ENCODE measurements at regions of chr2 and their contacts with region 1.

Region 1: GRCh38 chr2:37623971-37624900 is 47.2 kb downstream of the CDC42EP3 start:
- DNase-seq: peak in 2 of 5 donors; percentile 20 to 43
- H3K4me3 ChIP-seq: peak overlapping the region in 1 of 2 donors; percentile 36
- H3K4me3 Mint-ChIP-seq: peak overlapping the region; percentile 1 to 83 (median 78)
- H3K27ac ChIP-seq: peak overlapping the region; percentile 66
- H3K27ac Mint-ChIP-seq: peak overlapping the region; percentile 87 to 97 (median 91)
- H3K4me1 ChIP-seq: peaks cover 75% of the 10 kb centered on the region
- H3K4me1 Mint-ChIP-seq: peaks cover 52 to 84% (median 68%) of the 10 kb centered on the region in 4 donors
- H3K27me3 ChIP-seq: no peaks in the 10 kb centered on the region
- H3K27me3 Mint-ChIP-seq: no peaks in the 10 kb centered on the region

Region 2: DNA sequence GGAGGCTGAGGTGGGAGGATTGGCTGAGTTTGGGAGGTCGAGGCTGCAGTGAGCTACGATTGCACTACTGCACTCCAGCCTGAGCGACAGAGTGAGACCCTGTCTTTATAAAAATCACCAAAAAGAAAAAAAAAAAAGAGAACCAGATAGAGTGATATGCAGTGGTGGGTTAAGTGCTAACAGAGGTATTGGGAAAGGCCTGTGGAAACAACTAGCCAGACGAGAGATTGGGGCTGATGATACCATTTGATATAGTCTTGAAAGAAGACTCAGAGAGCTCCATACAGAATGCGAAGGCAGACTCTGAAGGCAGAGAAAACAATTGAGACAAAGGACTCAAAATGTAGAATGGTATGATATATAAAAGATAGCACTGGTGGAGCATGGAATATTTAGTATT is 86.9 kb before region 1 on chr2:
- CTCF ChIA-PET with region 1: no interaction called
- POLR2A ChIA-PET with region 1: interaction called, 10 read pairs
- intact Hi-C with region 1: loop called (anchors 5 kb)
- DNase-seq: no peak
- H3K4me3 ChIP-seq: no peak overlapping the region
- H3K4me3 Mint-ChIP-seq: no peak overlapping the region
- H3K27ac ChIP-seq: no peak overlapping the region
- H3K27ac Mint-ChIP-seq: no peak overlapping the region
- H3K4me1 ChIP-seq: no peaks in the 10 kb centered on the region
- H3K4me1 Mint-ChIP-seq: peaks cover 0 to 5% (median under 1%) of the 10 kb centered on the region in 4 donors
- H3K27me3 ChIP-seq: no peaks in the 10 kb centered on the region
- H3K27me3 Mint-ChIP-seq: peaks cover 0 to 1% of the 10 kb centered on the region in 2 donors

Region 3: DNA sequence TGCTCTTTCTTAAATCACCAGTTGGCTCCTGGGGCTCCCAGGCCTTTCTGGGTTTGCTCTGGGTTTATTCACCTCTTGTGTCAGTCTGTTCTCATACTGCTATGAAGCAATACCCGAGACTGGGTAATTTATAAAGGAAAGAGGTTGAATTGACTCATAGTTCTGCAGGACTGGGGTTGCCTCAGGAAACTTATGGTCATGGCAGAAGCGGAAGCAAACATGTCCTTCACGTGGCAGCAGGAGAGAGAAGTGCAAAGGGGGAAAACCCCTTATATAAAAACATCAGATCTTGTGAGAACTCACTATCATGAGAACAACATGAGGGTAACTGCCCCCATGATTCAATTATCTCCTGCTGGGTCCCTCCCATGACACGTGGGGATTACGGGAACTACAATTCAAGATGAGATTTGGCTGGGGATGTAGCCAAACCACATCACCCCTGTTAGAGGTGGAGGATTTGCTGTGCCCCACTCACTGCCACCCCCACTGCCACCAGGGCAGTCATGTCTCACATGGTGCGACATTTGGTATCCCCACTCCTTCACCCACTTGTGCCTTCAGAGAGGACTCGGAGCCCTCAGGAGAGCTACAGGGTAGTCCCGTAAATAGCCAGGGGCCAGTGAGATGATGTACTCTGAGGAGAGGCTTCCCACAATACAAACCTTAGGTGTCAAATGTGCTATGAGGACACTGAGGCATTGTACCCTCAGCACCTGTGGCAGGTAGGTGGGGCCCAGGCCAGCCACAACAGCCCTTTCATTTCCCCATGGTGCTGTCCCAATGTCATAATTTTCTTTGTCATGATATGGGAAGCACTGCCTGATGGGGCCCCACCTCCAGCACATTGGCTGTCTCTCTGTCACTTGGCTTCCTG is 11.5 kb after region 1 on chr2:
- CTCF ChIA-PET with region 1: interaction called, 4 read pairs
- POLR2A ChIA-PET with region 1: interaction called, 12 read pairs
- intact Hi-C with region 1: loop called (anchors 1 kb)
- DNase-seq: peak; percentile 70 to 94 (median 78)
- H3K4me3 ChIP-seq: peak overlapping the region in 1 of 2 donors; percentile 22
- H3K4me3 Mint-ChIP-seq: peak overlapping the region in 7 of 8 donors; percentile 54 to 80 (median 66)
- H3K27ac ChIP-seq: peak overlapping the region; percentile 72
- H3K27ac Mint-ChIP-seq: peak overlapping the region; percentile 92 to 98 (median 94)
- H3K4me1 ChIP-seq: peaks cover 76% of the 10 kb centered on the region
- H3K4me1 Mint-ChIP-seq: peaks cover 68 to 90% (median 75%) of the 10 kb centered on the region in 4 donors
- H3K27me3 ChIP-seq: no peaks in the 10 kb centered on the region
- H3K27me3 Mint-ChIP-seq: no peaks in the 10 kb centered on the region

Region 4: GRCh38 chr2:37641582-37642171 is 17.4 kb after region 1 on chr2:
- CTCF ChIA-PET with region 1: interaction called, 7 read pairs
- POLR2A ChIA-PET with region 1: interaction called, 92 read pairs
- intact Hi-C with region 1: no loop called
- DNase-seq: no peak
- H3K4me3 ChIP-seq: no peak overlapping the region
- H3K4me3 Mint-ChIP-seq: peak overlapping the region in 1 of 8 donors; percentile 22
- H3K27ac ChIP-seq: no peak overlapping the region
- H3K27ac Mint-ChIP-seq: peak overlapping the region in 5 of 7 donors; percentile 0 to 89 (median 81)
- H3K4me1 ChIP-seq: peaks cover 82% of the 10 kb centered on the region
- H3K4me1 Mint-ChIP-seq: peaks cover 60 to 93% (median 79%) of the 10 kb centered on the region in 4 donors
- H3K27me3 ChIP-seq: no peaks in the 10 kb centered on the region
- H3K27me3 Mint-ChIP-seq: no peaks in the 10 kb centered on the region

Region 5: GRCh38 chr2:37653805-37654378 is 29.7 kb after region 1 on chr2:
- CTCF ChIA-PET with region 1: interaction called, 23 read pairs
- POLR2A ChIA-PET with region 1: interaction called, 92 read pairs
- intact Hi-C with region 1: loop called (anchors 2 kb)
- DNase-seq: no peak
- H3K4me3 ChIP-seq: no peak overlapping the region
- H3K4me3 Mint-ChIP-seq: peak overlapping the region in 7 of 8 donors; percentile 48 to 76 (median 70)
- H3K27ac ChIP-seq: peak overlapping the region; percentile 63
- H3K27ac Mint-ChIP-seq: peak overlapping the region; percentile 78 to 96 (median 89)
- H3K4me1 ChIP-seq: peaks cover 96% of the 10 kb centered on the region
- H3K4me1 Mint-ChIP-seq: peaks cover 80 to 98% (median 88%) of the 10 kb centered on the region in 4 donors
- H3K27me3 ChIP-seq: no peaks in the 10 kb centered on the region
- H3K27me3 Mint-ChIP-seq: no peaks in the 10 kb centered on the region

Measured in CD4-positive, alpha-beta memory T cell (primary cell).